ENCODE measurements at regions of chr7 and their contacts with region 1.

Region 1: GRCh38 chr7:142412551-142413193 is 154.8 kb upstream of the PRSS58 start:
- DNase-seq: peak; percentile 62
- ATAC-seq: peak; percentile 81
- H3K4me3 Mint-ChIP-seq: no peak overlapping the region
- H3K27ac Mint-ChIP-seq: no peak overlapping the region
- H3K4me1 Mint-ChIP-seq: peaks cover 8% of the 10 kb centered on the region
- H3K27me3 Mint-ChIP-seq: peaks cover 5% of the 10 kb centered on the region

Region 2: GRCh38 chr7:142177869-142178268 is 234.8 kb before region 1 on chr7:
- CTCF ChIA-PET with region 1: no interaction called
- POLR2A ChIA-PET with region 1: no interaction called
- DNase-seq: no peak
- ATAC-seq: no peak
- H3K4me3 Mint-ChIP-seq: no peak overlapping the region
- H3K27ac Mint-ChIP-seq: no peak overlapping the region
- H3K4me1 Mint-ChIP-seq: peaks cover 2% of the 10 kb centered on the region
- H3K27me3 Mint-ChIP-seq: peaks cover 11% of the 10 kb centered on the region

Region 3: DNA sequence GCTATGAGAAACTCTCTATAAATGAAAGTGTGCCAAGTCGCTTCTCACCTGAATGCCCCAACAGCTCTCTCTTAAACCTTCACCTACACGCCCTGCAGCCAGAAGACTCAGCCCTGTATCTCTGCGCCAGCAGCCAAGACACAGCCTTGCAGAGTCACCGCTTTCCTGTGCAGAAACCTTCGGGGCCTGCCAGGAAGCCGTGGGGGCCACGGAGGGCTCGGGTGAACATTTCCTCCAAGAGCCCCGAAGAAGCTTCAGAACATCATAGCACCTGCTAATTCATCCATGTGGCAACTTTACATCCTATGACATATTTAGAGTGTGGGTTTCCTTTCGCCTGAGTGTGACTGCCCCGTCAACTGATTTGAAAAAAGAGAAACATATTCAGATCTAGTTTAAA is 99.1 kb before region 1 on chr7:
- CTCF ChIA-PET with region 1: no interaction called
- POLR2A ChIA-PET with region 1: no interaction called
- DNase-seq: peak; percentile 45
- ATAC-seq: peak; percentile 77
- H3K4me3 Mint-ChIP-seq: peak overlapping the region; percentile 10
- H3K27ac Mint-ChIP-seq: no peak overlapping the region
- H3K4me1 Mint-ChIP-seq: peaks cover 11% of the 10 kb centered on the region
- H3K27me3 Mint-ChIP-seq: peaks cover 32% of the 10 kb centered on the region

Region 4: DNA sequence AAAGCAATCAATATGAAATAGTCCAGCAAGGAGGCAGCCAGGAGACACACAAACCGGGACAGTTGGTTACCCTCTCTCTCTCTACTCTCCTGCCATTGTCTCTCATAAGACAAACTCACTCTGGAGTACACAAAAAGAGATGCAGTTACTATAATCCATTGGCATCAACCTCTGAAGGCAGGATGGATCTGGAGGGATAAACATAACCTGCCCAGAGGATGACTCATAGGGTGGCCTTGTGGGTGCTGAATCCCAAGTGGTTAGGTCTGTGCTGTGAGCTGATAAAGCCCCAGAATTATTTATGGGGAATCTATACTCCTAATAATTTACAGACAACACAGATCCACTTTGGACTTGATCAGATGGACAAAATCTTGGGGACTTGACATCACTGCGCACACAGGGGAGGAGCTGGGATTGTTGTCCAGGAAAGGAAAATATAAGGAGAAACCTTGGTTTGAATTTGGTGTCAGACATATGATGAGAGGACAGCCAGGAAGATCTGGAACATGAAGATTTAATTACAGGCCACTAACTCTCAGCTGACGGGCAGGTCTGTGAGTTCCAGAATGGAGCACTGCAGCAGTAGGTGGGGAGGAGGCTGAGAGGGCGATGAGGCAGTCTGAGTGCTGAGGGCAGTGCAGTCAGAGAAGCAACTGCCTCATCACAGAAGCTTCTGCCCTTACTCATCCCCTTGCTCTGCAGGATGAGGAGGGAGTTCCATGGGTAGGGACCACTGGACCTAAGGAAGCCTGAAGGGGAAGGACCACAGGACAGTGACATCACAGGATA is 40.9 kb before region 1 on chr7:
- CTCF ChIA-PET with region 1: no interaction called
- POLR2A ChIA-PET with region 1: no interaction called
- DNase-seq: no peak
- ATAC-seq: no peak
- H3K4me3 Mint-ChIP-seq: no peak overlapping the region
- H3K27ac Mint-ChIP-seq: no peak overlapping the region
- H3K4me1 Mint-ChIP-seq: no peaks in the 10 kb centered on the region
- H3K27me3 Mint-ChIP-seq: peaks cover 24% of the 10 kb centered on the region

Region 5: DNA sequence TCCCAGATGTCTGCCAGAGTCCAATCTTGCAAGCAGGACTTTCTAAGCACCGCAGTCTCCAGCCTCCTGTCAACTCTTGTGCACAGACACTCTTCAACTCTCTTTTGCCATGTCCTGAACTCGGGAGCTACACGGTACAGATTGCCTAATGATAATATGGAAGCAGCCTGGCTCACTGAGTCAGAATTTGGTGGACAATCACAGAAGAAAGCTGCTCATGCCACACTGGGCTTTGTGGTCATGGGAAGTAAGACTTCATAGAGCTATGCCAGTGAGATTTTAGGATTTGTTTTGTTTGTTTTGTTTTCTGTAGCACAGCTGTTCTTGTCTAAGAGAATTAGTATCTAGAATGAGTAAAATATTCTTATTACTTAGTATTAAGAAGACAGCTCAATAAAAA is 10.7 kb before region 1 on chr7:
- CTCF ChIA-PET with region 1: interaction called, 10 read pairs
- POLR2A ChIA-PET with region 1: no interaction called
- DNase-seq: no peak
- ATAC-seq: no peak
- H3K4me3 Mint-ChIP-seq: no peak overlapping the region
- H3K27ac Mint-ChIP-seq: no peak overlapping the region
- H3K4me1 Mint-ChIP-seq: no peaks in the 10 kb centered on the region
- H3K27me3 Mint-ChIP-seq: peaks cover 20% of the 10 kb centered on the region

Region 6: DNA sequence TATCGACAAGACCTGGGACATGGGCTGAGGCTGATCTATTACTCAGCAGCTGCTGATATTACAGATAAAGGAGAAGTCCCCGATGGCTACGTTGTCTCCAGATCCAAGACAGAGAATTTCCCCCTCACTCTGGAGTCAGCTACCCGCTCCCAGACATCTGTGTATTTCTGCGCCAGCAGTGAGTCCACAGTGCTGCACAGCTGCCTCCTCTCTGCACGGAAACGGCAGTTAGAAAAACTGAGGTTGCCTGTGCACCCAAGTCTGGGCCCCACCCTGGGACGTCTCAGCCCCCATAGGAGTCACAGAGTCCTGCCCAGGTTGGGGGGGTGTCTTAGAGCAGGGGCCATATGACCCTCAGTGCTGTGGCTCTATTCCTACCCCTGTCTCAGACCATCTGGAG is 12.6 kb after region 1 on chr7:
- CTCF ChIA-PET with region 1: interaction called, 28 read pairs
- POLR2A ChIA-PET with region 1: no interaction called
- DNase-seq: no peak
- ATAC-seq: peak; percentile 61
- H3K4me3 Mint-ChIP-seq: no peak overlapping the region
- H3K27ac Mint-ChIP-seq: no peak overlapping the region
- H3K4me1 Mint-ChIP-seq: peaks cover 19% of the 10 kb centered on the region
- H3K27me3 Mint-ChIP-seq: peaks cover 3% of the 10 kb centered on the region